ENCODE measurements at regions of chr6 and their contacts with region 1.

Region 1: DNA sequence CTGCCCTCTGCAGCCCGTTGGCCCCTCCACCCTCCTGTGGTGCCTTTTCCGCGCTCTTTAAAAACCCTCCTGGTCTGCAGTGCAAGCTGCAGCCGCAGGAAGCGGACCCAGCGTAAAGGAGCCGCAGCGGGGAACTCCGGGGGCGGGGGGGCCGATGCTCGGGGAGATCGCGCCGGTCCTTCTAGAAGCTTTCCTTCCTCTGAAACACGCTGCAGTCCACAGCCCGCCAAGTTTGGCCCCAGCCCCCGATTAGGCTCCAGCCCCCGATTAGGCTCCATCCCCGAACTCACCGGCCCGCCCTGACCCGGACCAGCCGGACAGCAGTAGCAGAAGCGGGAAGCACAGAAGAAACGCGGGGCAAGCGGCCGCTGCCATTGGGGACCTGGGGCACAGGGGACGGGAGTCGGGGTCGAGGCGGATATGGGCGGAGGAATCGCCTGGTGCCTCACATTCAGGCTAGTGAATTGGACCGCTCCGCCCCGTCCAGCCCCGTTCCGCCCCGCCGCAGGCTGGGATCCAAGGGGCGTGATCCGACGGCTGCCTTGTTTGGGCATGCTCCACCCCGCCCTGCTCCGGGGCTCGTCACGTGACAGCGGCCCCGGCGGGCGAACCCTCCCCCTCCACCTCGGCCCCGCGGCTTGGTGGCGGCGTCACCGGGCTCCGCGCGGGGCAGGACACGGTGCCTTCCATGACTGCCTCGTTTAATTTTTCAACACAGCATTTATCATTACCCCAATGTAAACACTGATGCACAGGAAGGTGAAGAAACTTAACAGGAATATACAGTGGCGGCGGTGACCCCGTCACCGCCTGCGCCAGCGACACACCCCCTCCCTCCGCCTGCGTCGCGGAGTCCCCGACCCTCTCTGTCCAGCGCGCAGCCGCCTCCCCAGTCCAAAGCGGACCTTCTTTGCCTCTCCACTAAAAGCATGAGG is 20.3 kb downstream of the RAET1L start:
- DNase-seq: peak; percentile 94
- H3K4me3 Mint-ChIP-seq: peak overlapping the region; percentile 80
- H3K27ac Mint-ChIP-seq: peak overlapping the region; percentile 42
- H3K4me1 Mint-ChIP-seq: peaks cover 64% of the 10 kb centered on the region
- H3K27me3 Mint-ChIP-seq: peaks cover 27% of the 10 kb centered on the region

Region 2: DNA sequence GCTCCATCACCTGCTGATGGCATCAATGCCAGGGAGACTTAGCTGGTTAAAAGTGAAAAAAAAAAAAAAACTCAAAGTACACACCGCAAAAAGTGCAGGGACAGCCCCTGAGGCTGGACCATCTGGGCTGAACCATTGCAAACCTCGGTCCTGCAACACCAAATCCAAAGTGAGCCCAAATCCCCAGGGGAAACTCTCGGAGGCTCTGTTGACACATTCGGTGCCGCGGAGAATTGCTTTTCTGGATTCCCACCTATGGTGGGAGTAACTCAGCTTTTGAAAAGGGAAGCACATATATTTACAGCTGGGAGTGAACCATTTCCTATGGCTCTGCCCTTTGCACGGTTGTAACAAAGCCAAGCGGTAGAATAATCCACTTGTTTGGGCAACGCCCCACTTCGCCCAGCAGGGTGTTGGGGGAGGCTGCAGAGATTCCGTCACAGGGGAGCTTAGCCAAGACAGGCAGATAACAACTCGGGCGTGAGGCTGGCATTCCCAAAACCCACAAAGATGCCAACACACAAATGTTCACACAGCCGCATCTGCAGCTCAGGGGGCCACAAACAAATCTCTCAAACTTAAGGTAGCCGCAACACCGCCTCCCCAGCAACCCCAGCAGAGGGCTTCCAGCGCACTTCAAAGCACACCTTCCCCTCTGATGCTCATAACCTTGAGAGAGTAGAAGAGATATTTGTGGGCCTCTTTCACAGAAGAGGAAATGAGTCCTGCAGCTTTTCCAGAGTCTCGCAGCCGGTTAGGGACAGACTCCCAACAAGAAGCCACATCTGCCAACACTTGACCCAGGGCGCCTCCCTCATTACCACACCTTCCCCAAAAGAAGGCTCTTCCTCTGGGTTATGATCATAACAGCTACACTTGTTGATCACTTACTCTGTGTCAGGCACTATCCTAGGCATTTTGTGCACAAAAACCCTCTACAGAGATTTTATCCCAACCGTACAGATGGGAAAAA is 531.7 kb before region 1 on chr6:
- CTCF ChIA-PET with region 1: no interaction called
- POLR2A ChIA-PET with region 1: no interaction called
- intact Hi-C with region 1: no loop called
- DNase-seq: no peak
- H3K4me3 Mint-ChIP-seq: peak overlapping the region; percentile 21
- H3K27ac Mint-ChIP-seq: peak overlapping the region; percentile 47
- H3K4me1 Mint-ChIP-seq: peaks cover 80% of the 10 kb centered on the region
- H3K27me3 Mint-ChIP-seq: no peaks in the 10 kb centered on the region

Region 3: DNA sequence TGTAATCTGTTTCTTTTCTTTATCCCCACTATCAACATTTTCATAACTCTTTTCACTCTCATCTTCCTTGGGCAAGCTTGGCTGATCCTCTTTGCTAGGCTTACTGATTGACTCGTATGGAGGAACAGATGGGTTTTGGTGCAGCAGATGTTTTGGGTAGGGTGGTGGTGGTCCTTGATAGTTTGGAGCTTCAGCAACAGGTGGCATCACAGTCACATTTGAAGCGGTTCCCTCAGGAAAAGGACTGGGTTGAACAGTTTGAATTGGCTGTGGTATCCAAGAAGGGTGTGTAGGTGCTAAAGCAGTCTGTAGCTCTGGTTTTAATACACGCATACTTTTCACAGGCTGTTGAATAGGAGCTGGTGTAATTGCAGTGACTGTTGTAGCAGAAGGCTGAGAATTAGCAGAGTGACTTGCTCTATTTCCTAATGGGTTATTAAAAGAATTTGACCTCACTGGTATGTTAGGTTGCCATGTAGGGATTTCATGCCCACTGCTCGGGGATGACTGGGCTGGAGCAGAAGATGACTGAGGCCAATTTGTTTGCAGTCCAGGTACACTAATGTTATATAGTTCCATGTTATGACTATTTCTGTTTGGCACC is 321.7 kb before region 1 on chr6:
- CTCF ChIA-PET with region 1: no interaction called
- POLR2A ChIA-PET with region 1: no interaction called
- intact Hi-C with region 1: no loop called
- DNase-seq: no peak
- H3K4me3 Mint-ChIP-seq: no peak overlapping the region
- H3K27ac Mint-ChIP-seq: no peak overlapping the region
- H3K4me1 Mint-ChIP-seq: peaks cover 23% of the 10 kb centered on the region
- H3K27me3 Mint-ChIP-seq: no peaks in the 10 kb centered on the region

Region 4: DNA sequence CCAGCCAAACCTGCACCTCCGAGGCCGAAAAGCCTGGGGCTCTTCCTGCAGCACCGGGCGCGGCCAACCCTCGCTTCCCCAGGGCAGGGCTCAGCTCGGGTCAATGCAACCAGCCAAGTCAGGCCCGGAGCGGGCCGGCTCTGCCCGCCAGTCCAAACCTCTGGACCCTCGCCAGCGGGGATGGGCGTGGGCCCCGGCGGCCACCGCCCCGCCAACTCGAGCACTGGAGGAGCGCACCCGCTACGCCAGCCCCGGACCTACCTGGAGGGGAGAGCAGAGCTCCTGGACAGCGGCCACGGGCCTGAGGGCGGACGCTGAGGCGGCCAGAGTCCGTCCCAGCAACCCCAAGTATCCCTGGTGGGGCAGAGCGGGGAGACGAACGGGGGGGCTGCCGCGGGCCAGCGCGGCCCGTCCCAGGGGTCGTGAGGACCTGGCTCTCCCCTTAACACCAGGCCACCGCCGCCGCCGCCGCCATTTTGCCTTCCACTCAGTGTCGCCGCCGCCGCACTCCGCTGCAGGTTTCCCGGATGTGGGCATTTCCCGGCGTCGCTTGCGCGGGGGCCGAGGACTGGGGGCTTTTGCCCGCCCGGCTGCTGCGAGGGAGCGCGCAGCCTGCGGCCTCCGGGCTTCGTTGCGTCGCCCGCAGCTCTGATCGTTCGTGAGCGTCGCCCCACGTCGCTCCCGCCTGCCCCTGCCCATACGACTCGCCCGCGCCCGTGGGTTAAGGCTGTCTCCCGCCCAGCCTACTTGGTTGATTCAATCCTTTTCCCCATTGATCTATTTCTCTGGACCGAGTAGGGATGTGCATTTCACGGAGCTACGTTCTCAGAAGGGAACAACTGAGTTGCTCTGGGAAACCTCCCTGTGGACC is 287.2 kb before region 1 on chr6 and contains the start of gene LATS1:
- CTCF ChIA-PET with region 1: no interaction called
- POLR2A ChIA-PET with region 1: no interaction called
- intact Hi-C with region 1: loop called (anchors 10 kb)
- DNase-seq: peak; percentile 95
- H3K4me3 Mint-ChIP-seq: peak within 1 kb of the TSS; percentile 92
- H3K27ac Mint-ChIP-seq: peak within 1 kb of the TSS; percentile 96
- H3K4me1 Mint-ChIP-seq: peaks cover 31% of the 10 kb centered on the region
- H3K27me3 Mint-ChIP-seq: no peaks in the 10 kb centered on the region
- total RNA-seq, gene LATS1: 19.1 to 20.1 TPM

Region 5: DNA sequence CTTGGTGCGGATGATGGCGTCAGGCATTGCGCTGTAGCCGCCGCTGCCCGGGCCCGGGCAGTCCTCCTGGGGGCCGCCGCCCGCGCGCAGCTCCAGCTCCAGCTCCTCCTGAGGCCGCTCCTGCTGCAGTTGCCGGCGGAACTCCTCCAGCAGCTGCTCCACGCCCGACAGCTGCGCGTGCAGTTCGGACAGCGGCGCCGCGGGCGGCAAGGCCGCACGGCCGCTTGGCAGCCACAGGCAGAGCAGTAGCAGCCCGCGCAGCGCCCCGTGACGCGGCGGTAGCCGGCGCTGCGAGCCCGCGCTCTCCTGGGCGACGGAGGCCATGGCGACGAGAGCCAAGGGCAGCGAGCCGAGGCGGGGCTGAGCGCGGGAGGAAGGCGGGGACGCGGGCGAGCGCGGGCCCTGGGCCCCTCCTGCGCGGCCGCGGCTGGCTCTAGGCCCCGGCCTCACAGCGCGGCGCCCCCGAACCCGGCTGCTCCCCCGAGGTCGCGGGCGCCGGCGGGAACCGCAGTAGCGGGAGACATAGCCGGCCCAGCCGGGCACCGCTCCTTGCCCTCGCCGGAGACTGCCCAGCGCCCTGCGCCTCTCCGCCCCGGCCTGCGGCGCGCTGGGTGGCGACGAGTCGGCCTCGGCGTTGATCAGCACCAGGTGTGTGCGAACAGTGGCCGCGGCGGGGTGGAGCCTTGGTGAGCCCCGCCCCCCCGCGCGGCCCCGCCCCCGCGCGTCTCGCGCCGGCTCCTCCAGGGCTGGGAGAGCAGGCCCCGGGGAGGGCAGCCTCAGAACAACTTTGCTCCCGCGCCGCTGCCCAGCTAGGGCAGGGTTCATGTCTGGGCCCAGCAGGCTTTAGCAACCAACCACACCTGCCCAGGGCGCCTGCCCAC is 141.1 kb before region 1 on chr6 and contains the start of gene LRP11:
- CTCF ChIA-PET with region 1: no interaction called
- POLR2A ChIA-PET with region 1: no interaction called
- intact Hi-C with region 1: loop called (anchors 5 kb)
- DNase-seq: peak; percentile 88
- H3K4me3 Mint-ChIP-seq: peak within 1 kb of the TSS; percentile 81
- H3K27ac Mint-ChIP-seq: no peak within 1 kb of the TSS
- H3K4me1 Mint-ChIP-seq: peaks cover 19% of the 10 kb centered on the region
- H3K27me3 Mint-ChIP-seq: peaks cover 2% of the 10 kb centered on the region
- total RNA-seq, gene LRP11: 6.7 to 7.2 TPM

Region 6: DNA sequence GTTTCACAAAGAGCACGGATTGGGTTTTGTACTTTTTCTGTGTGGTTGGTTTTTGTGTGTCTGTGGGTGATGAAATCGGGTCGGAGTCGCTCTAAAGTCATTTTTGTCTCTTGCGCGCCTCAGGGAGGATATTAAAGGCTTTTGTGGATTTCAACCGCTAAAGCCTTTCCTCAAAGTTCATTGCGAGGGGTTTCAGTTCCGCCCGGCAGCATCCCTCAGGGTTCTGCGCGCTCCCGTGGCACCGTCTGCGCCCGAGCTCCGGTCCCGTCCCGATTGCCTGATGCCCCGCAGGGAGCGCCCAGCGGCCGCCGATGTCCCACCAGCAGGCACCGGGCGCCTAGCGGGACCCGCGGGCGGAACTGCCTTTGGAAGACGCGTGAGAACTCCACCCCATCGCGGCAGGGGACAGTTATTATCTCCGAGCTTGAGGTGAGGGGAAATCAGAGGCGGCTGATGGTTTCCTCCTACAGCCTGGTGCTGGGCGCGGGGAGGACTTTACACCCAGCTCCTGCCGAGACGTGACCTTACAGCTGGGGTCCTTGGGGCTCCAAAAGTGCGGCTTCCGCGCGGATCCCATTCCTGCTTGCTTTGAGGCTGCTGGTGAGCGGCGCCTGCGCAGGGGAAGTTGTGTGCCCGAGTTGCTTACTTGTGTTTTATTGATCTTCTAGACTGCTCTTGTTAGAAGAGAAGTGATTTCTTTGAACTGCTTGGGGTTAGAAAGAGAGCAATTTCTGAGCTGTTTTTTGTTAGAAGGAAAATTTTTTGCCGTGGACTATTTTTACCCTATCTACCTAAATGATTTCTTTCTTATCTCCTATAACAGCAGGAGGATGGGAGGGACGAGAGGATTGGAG is 14.2 kb before region 1 on chr6:
- CTCF ChIA-PET with region 1: no interaction called
- POLR2A ChIA-PET with region 1: interaction called, 3 read pairs
- intact Hi-C with region 1: loop called (anchors 1 kb)
- DNase-seq: peak; percentile 46
- H3K4me3 Mint-ChIP-seq: peak overlapping the region; percentile 66
- H3K27ac Mint-ChIP-seq: peak overlapping the region; percentile 11
- H3K4me1 Mint-ChIP-seq: peaks cover 22% of the 10 kb centered on the region
- H3K27me3 Mint-ChIP-seq: peaks cover 80% of the 10 kb centered on the region

Region 7: DNA sequence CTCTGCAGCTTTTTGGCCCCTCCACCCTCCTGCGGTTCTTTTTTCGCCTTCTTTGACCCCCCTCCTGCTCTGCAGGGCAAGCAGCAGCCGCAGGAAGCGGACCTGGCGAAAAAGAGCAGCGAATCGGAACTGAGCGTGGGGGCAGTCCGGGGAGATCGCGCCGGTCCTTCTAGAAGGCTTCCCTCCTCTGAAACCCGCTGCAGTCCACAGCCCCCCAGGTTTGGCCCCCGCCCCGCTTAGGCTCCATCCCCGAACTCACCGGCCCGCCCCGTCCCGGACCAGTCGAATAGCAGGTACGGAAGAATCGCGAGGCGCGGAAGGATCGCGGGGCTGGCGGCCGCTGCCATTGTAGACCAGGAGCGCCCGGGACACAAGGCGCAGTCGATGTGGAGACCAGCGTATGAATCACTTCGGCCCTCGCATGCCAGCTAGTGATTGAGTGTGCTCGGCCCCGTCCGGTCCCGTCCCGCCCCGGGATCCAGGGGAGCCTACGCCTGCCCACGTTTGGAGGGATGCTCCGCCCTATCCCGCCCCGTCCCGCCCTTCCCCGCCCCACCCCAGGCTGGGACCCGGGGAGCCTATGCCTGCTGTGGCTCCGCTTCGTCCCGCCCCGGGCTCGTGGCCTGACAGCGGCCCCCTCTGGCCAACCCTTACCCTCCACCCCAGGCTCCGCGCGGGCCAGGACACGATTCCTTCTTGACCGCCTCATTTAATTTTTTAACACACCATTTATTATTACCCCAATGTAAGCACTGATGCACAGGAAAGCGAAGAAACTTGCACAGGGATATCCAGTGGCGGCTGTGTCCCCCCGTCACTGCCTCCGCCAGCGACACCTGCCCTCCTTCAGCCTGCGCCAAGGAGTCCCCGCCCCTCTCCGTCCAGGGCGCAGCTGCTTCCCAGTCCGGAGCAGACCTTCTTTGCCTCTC is 63.9 kb after region 1 on chr6 and contains the start of gene ULBP3:
- CTCF ChIA-PET with region 1: interaction called, 3 read pairs
- POLR2A ChIA-PET with region 1: no interaction called
- intact Hi-C with region 1: loop called (anchors 1 kb)
- DNase-seq: peak; percentile 87
- H3K4me3 Mint-ChIP-seq: peak within 1 kb of the TSS; percentile 66
- H3K27ac Mint-ChIP-seq: no peak within 1 kb of the TSS
- H3K4me1 Mint-ChIP-seq: peaks cover 11% of the 10 kb centered on the region
- H3K27me3 Mint-ChIP-seq: peaks cover 13% of the 10 kb centered on the region
- total RNA-seq, gene ULBP3: 0.61 TPM in 1 of 2 experiments, not detected in the other

Region 8: DNA sequence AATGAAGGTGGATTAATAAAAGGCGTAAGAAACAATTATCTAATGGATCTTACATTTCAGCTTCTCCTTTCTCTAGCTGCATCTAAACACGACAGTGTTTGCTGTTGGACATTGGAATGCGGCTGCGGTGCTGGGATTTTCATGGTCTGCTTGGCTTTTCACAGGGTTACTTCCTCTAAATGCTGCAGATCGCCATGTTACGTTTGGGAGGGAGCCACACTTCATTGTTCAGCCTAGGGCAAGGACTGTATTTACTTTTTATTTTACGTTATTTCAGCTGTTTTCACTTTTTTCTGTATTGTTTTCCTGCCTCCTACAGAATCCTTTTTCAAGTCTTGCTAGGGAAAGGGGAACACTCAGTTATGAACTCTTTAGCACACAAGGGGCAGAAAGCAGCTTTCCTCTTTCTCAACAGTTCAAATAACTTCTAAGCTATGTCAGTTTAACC is 762.5 kb after region 1 on chr6:
- CTCF ChIA-PET with region 1: no interaction called
- POLR2A ChIA-PET with region 1: no interaction called
- intact Hi-C with region 1: no loop called
- DNase-seq: no peak
- H3K4me3 Mint-ChIP-seq: no peak overlapping the region
- H3K27ac Mint-ChIP-seq: no peak overlapping the region
- H3K4me1 Mint-ChIP-seq: no peaks in the 10 kb centered on the region
- H3K27me3 Mint-ChIP-seq: no peaks in the 10 kb centered on the region